Activated T-helper 1 cell treated with anti-CD3 and anti-CD28 coated beads, Interleukin-12 subunit alpha, Interleukin-12 subunit beta, Interleukin-2, Interleukin-4 antibody, amounts not matched to agents 30 ng/mL and 10 ng/mL and 1 ng/mL, durations not matched to agents 14 hours and 24 hours and 36 hours (primary cell): ENCODE measurements at regions of chr3 and their contacts with region 1.

Region 1: DNA sequence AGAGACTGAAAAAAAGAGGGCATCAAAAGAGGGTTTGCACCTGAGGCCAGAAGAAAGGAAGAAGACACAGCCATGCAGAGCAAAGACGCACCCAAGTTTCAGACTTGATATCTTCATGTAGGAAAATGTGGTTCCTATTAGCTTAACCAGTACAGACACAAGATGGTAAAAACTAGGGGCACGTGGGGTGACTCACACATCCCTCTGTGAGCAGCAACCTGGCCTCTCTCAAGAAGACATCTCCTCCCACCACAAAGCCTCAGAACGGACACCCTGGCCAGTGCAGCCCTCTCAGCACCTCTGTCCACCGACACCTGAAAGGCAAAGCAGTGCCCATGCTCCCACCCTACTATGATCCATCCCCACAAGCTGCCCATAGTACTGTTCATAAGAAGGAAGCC is 33.3 kb downstream of the GLB1 start:
- DNase-seq: no peak
- H3K4me3 Mint-ChIP-seq: peak overlapping the region; percentile 2
- H3K27ac Mint-ChIP-seq: peak overlapping the region; percentile 93
- H3K4me1 Mint-ChIP-seq: peaks cover 57% of the 10 kb centered on the region
- H3K27me3 Mint-ChIP-seq: no peaks in the 10 kb centered on the region

Region 2: GRCh38 chr3:32947789-32948238 is 115.8 kb before region 1 on chr3:
- intact Hi-C with region 1: loop called (anchors 1 kb)
- DNase-seq: peak; percentile 83
- H3K4me3 Mint-ChIP-seq: no peak overlapping the region
- H3K27ac Mint-ChIP-seq: peak overlapping the region; percentile 44
- H3K4me1 Mint-ChIP-seq: peaks cover 48% of the 10 kb centered on the region
- H3K27me3 Mint-ChIP-seq: peaks cover 2% of the 10 kb centered on the region

Region 3: GRCh38 chr3:33023172-33024136 is 40.2 kb before region 1 on chr3:
- intact Hi-C with region 1: loop called (anchors 1 kb)
- DNase-seq: no peak
- H3K4me3 Mint-ChIP-seq: peak overlapping the region; percentile 28
- H3K27ac Mint-ChIP-seq: peak overlapping the region; percentile 94
- H3K4me1 Mint-ChIP-seq: peaks cover 56% of the 10 kb centered on the region
- H3K27me3 Mint-ChIP-seq: peaks cover 1% of the 10 kb centered on the region

Region 4: GRCh38 chr3:33047842-33048834 is 15.5 kb before region 1 on chr3:
- intact Hi-C with region 1: loop called (anchors 1 kb)
- DNase-seq: peak; percentile 70
- H3K4me3 Mint-ChIP-seq: peak overlapping the region; percentile 80
- H3K27ac Mint-ChIP-seq: peak overlapping the region; percentile 99
- H3K4me1 Mint-ChIP-seq: peaks cover 81% of the 10 kb centered on the region
- H3K27me3 Mint-ChIP-seq: peaks cover 1% of the 10 kb centered on the region

Region 5: DNA sequence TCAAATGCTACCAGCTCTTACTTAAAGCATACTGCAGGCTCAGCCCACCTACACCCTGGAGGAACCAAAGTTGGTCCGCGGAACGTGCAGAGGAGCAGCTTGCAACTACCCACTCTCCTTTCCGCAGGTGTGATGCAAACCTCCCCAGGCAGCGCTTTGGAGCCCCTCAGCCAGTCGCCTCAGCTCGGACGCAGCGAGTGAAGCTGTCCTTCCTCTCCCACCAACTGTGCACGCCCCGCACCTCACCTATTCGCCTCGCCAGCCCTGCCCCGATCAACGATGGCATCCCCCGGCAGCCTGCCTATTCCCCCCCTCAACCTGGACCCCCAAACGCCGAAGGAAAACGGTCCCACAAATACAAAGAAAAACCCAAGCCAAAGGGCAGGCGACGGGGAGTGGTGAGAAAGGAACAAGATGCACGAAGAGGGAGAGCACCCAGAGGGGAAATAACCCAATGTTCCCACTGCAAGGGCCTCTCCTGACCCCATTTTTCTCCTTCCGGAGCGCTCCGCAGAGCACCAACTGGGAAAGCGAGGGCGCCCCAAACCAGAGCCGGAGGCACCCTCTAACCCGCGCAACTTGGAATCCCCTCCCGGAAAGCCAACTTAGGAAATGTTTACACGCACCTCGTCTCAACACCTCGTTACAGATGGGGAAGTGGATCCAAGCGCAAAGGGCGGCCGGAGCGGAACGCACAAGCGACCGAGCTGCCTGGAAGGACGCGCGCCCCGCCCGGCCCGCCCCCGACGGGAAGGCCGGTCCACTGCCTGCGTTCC is 32.6 kb after region 1 on chr3:
- intact Hi-C with region 1: loop called (anchors 2 kb)
- DNase-seq: peak; percentile 39
- H3K4me3 Mint-ChIP-seq: peak overlapping the region; percentile 97
- H3K27ac Mint-ChIP-seq: peak overlapping the region; percentile 86
- H3K4me1 Mint-ChIP-seq: peaks cover 43% of the 10 kb centered on the region
- H3K27me3 Mint-ChIP-seq: peaks cover 2% of the 10 kb centered on the region

Region 6: GRCh38 chr3:33417066-33417673 is 353.5 kb after region 1 on chr3:
- intact Hi-C with region 1: no loop called
- DNase-seq: no peak
- H3K4me3 Mint-ChIP-seq: no peak overlapping the region
- H3K27ac Mint-ChIP-seq: no peak overlapping the region
- H3K4me1 Mint-ChIP-seq: peaks cover 19% of the 10 kb centered on the region
- H3K27me3 Mint-ChIP-seq: no peaks in the 10 kb centered on the region